ENCODE measurements at regions of chr1 and their contacts with region 1.

Region 1: DNA sequence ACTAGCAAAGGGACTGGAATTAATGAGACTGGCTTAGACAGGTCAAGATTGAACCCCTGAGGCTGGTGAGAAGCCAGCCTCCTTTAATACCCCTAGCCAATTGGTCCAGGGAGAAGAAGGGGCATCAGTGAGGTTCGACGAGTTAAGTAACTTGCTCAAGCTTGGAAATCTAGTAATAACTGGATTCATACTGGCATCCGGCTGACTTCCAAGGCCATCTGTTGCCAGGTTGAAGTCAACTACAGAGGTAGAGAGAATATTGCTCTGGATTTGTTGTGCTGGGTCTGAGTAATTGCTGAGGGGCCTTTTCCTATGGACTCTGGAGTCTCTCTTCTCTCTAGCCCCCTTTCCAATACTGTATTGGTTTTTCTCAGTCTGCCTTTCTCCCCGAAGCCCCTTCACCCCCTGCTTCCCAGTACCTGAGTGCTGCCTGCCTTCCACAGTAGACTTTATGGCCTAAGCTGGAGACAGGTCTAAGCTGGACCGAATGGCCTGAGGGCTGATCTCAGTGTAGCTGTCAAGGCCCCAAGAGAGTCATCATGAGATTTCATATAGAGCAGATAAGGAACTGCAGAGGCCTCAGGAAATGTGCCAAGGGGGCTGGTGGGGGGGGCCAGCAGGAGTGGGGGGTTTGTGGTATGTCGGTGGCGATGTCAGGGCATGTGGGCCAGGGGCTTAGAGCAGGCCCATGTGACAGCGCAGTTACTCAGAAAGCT is 42.4 kb upstream of the IL19 start:
- DNase-seq: no peak

Region 2: DNA sequence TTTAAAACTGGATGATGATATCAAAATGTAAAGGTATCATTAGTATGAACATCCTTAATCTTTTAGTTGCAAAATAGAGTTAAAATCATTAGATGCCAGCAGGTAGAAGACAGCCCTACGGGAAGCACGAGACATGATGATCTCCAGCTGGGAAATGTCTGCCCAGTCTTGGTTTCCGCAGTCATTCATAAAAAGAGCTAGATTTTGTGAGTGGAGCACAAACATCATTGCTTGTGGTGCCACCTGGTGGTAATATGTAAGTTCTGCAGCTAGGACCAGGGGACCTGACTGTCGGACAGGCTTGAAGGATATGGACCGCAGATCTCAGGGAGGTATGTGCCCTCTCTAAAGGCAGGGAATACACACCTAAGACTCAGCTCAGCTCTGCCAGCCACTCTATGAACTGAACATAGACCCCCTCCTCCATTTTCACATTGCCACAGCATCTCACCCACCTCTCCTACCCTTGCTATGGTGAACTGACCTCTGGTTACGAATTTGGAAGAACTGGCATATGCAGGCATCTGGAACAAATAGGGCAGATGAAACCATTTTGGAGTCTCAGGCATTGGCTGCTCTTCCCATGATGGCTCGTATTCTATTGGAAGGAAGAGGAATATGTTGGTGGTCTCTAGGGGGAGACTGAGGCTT is 184.4 kb after region 1 on chr1:
- intact Hi-C with region 1: loop called (anchors 2 kb)
- DNase-seq: peak in 8 of 10 donors; percentile 60 to 93 (median 74)